GM12878 (cell line): ENCODE measurements at regions of chr15 and their contacts with region 1.

Region 1: DNA sequence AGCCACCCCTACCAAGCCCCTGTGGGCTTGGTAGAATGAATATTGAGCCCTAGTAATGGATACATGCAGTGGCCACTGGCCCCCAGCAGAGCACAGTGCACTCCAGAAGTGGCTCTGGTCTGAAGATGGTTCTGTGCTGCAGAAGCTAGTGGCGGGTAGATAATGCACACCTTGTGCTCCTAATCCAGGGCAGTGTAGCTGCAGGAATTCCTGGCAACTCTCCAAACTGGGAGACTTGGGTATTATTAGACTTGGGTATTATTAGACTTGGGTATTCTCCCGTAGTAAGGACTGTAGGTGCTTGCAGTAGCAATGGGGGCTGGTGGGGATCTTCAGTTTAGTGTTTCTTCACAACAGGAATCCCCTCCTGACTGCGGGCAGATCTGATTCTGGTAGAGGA is 34.7 kb downstream of the NUSAP1 start:
- DNase-seq: no peak
- ATAC-seq: no peak
- H3K4me3 ChIP-seq: no peak overlapping the region
- H3K27ac ChIP-seq: no peak overlapping the region
- H3K4me1 ChIP-seq: no peaks in the 10 kb centered on the region
- H3K27me3 ChIP-seq: no peaks in the 10 kb centered on the region
- CTCF ChIP-seq: no peak
- EP300 ChIP-seq: no peak
- POLR2A ChIP-seq: no peak
- RAD21 ChIP-seq: no peak

Region 2: DNA sequence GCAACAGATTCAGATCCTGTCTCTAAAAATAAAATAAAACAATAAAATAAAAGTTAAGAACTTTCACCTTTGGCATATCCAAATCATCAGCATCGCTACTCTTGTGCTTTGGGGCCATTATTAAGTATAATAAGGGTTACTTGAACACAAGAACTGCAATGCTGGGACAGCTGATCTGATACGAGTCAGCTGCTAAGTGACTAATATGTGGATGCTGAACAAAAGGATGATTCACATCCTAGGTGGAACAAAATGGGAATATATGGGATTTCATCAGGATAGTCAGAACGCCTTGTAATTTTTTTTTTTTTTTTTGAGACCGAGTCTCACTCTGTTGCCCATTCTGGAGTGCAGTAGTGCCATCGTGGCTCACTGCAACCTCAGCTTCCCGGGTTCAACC is 1176.8 kb before region 1 on chr15:
- CTCF ChIA-PET with region 1: no interaction called
- POLR2A ChIA-PET with region 1: no interaction called
- RAD21 ChIA-PET with region 1: no interaction called
- SMC1A ChIA-PET with region 1: no interaction called
- in situ Hi-C with region 1: loop called (anchors 10 kb)
- intact Hi-C with region 1: no loop called
- DNase-seq: no peak
- ATAC-seq: no peak
- H3K4me3 ChIP-seq: no peak overlapping the region
- H3K27ac ChIP-seq: no peak overlapping the region
- H3K4me1 ChIP-seq: peaks cover 4% of the 10 kb centered on the region; the same call in 1 of the 2 replicates
- H3K27me3 ChIP-seq: no peaks in the 10 kb centered on the region
- CTCF ChIP-seq: no peak
- EP300 ChIP-seq: no peak
- POLR2A ChIP-seq: no peak
- RAD21 ChIP-seq: no peak